Esophagus muscularis mucosa (tissue), 4 donors: ENCODE measurements at regions of chr4 and their contacts with region 1.

Region 1: DNA sequence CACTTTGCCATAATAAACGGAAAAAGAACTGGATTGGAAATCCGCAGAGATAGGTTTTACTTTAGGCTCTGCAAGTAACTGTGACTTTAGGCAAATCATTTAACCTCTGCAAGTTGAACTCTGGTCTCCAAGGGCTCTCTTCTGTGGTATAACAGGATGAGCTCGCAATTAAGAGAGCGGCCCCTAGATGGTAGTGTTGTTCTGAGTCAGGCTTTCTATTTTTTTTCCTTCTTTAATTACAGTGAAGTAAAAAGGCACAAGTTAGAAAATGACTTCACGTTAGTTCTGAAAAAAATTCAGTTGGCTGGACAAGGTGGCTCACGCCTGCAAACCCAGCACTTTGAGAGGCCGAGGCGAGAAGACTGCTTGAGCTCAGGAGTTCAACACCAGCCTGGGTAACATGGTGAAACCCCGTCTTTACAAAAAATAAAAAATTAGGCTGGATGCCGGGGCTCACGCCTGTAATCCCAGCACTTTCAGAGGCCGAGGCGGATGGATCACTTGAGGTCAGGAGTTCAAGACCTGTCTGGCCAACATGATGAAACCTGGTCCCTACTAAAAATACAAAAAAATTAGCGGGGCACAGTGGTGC is 18.0 kb downstream of the RPS3A start:
- DNase-seq: no peak
- H3K4me3 ChIP-seq: no peak overlapping the region
- H3K27ac ChIP-seq: peak overlapping the region in 2 of 4 donors; percentile 34 to 57
- H3K4me1 ChIP-seq: peaks cover 13 to 20% (median 14%) of the 10 kb centered on the region in 4 donors
- H3K27me3 ChIP-seq: no peaks in the 10 kb centered on the region
- CTCF ChIP-seq: peak; percentile 62 to 73 (median 67)
- EP300 ChIP-seq: no peak
- POLR2A ChIP-seq: no peak

Region 2: DNA sequence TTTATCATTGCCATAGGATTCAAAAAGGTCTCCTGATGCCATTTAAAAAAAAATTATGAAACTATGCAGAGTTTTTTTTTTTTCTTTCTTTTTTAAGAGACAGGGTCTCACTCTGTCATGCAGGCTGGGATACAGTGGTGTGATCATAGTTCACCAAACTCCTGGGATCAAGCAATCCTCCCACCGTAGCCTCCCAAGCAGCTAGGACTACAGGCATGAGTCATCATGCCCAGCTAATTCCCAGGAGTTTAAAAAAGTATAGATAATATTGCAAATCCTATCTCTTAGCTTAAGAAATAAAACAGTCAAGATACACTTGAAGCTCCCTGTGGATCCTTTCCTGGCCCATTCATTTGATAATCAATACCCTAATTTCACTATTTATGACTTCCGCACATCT is 100.9 kb after region 1 on chr4:
- intact Hi-C with region 1: no loop called
- DNase-seq: no peak
- H3K4me3 ChIP-seq: no peak overlapping the region
- H3K27ac ChIP-seq: no peak overlapping the region
- H3K4me1 ChIP-seq: peaks cover 32 to 49% (median 36%) of the 10 kb centered on the region in 4 donors
- H3K27me3 ChIP-seq: no peaks in the 10 kb centered on the region
- CTCF ChIP-seq: no peak
- EP300 ChIP-seq: no peak
- POLR2A ChIP-seq: no peak

Region 3: GRCh38 chr4:151325111-151325948 is 207.9 kb after region 1 on chr4 and contains the start of gene SH3D19:
- intact Hi-C with region 1: loop called (anchors 5 kb)
- DNase-seq: peak; percentile 93
- H3K4me3 ChIP-seq: peak within 1 kb of the TSS; percentile 85 to 90 (median 87)
- H3K27ac ChIP-seq: peak within 1 kb of the TSS; percentile 95 to 98 (median 96)
- H3K4me1 ChIP-seq: peaks cover 26 to 53% (median 41%) of the 10 kb centered on the region in 4 donors
- H3K27me3 ChIP-seq: no peaks in the 10 kb centered on the region
- CTCF ChIP-seq: peak in 1 of 3 experiments; percentile 19
- EP300 ChIP-seq: no peak
- POLR2A ChIP-seq: no peak
- total RNA-seq, gene SH3D19: 115 to 186 (median 177) TPM

Region 4: DNA sequence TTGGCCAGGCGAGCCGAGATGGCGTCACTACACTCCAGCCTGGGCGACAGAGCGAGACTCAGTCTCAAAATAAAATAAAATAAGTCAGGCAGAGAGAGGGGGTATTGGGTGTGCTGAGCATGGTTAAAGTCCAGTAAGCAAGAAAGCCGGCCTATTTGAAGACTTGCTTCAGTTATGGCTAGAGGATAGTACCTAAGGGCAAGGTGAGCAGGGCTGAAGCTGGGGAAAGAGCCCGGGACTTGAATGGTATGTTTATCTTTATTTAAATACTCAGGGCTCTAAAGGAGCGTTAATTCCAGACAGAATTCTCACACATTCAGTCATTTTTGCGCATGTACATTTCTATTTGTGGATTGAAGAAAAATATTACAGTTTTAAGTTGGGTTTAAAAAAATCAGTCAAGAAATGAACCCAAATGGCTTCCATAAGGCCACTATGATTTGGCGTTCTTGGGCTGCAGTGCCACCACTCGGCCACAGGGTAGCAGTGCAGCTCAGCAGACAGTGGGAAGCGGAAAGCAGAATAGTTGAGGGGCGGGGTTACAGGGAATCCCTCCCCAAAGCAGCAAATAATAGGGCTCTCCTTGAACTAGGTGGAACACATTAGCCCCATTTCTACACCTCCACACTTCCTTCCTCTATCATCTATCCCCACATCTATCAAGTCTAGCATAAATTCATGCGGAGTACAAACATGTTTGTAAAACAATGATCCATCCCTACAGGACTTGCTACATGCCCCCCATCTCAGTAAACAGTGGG is 245.1 kb after region 1 on chr4:
- intact Hi-C with region 1: loop called (anchors 5 kb)
- DNase-seq: no peak
- H3K4me3 ChIP-seq: no peak overlapping the region
- H3K27ac ChIP-seq: no peak overlapping the region
- H3K4me1 ChIP-seq: peaks cover 0 to 8% (median 0%) of the 10 kb centered on the region in 4 donors
- H3K27me3 ChIP-seq: no peaks in the 10 kb centered on the region
- CTCF ChIP-seq: peak in 2 of 3 experiments; percentile 96 to 98
- EP300 ChIP-seq: no peak
- POLR2A ChIP-seq: no peak

Region 5: DNA sequence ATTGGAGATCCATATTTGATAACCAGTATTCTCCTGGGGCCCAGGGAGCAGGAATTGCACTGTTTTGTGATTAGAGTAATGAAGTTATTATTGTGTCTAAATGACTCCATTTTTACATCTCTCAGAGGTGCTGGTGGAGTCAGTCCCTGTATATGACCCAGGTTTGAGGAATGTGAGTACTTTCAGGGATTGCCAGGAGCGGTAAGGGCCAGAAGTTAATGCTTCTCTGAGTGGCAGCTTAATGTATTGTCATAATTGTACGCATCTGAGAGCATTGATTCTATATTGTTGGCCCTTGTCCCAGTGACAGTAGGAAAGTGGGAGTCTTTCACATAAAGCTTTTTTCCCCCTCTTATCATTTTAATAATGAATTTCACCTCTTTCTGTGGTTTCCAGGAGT is 497.1 kb after region 1 on chr4:
- intact Hi-C with region 1: loop called (anchors 5 kb)
- DNase-seq: no peak
- H3K4me3 ChIP-seq: no peak overlapping the region
- H3K27ac ChIP-seq: no peak overlapping the region
- H3K4me1 ChIP-seq: no peaks in the 10 kb centered on the region
- H3K27me3 ChIP-seq: no peaks in the 10 kb centered on the region
- CTCF ChIP-seq: no peak
- EP300 ChIP-seq: no peak
- POLR2A ChIP-seq: no peak

Region 6: DNA sequence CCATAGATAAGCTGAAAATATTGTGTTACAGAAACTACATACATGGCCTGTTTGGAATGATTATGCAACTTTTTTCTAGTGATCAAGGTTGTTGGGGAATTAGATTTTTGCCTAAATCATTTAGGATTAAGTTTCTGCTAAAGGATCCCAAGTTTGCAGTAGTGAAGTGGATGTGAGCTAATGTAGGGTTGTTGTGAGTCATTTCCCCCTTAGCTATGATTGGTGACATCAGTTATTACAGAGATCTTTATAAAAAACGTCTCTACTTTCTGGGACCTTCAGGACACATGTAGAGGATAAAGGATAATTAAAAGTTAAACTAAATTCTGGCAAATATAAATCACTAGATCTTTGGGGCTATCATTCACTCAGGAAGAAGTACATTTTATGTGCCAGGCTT is 510.0 kb after region 1 on chr4:
- intact Hi-C with region 1: no loop called
- DNase-seq: no peak
- H3K4me3 ChIP-seq: no peak overlapping the region
- H3K27ac ChIP-seq: no peak overlapping the region
- H3K4me1 ChIP-seq: no peaks in the 10 kb centered on the region
- H3K27me3 ChIP-seq: no peaks in the 10 kb centered on the region
- CTCF ChIP-seq: no peak
- EP300 ChIP-seq: no peak
- POLR2A ChIP-seq: no peak